ENCODE measurements at regions of chr1 and their contacts with region 1.

Region 1: GRCh38 chr1:172429331-172430127 is 9.0 kb downstream of the C1orf105 start:
- DNase-seq: peak; percentile 50
- H3K4me3 Mint-ChIP-seq: no peak overlapping the region
- H3K27ac Mint-ChIP-seq: no peak overlapping the region
- H3K4me1 Mint-ChIP-seq: peaks cover 33% of the 10 kb centered on the region
- H3K27me3 Mint-ChIP-seq: no peaks in the 10 kb centered on the region

Region 2: DNA sequence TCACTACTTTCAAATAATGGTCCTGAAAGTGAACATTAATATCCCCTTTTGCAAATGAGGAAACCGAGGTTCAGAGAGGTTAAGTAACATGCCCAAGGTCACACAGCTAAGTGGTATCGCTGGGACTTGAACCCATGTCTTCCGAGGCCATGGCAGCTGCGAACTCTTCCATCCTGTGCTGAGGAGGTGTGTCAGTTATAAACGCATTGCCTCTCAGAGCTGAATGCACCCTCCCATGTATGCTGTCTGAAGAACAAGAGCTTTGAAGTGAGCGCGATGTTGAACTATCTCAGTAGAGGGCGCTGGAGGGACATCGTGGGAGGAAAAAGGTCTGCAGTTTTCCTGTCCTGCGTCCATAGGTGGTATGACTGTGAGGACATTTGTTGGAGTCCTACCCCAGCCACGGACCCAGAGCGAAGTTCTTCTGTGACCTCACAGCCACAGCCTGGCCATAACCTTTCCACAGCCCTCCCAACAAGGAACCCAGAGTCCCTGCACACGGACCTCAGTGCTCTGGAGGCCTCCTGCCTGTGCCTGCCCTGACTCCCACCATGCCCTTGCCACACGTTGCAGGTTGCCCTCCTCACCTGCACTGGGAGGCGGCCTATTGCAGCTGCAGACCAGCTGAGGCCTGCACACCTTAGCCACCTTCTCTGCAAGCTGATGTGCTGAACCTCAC is 784.6 kb before region 1 on chr1:
- CTCF ChIA-PET with region 1: no interaction called
- POLR2A ChIA-PET with region 1: no interaction called
- intact Hi-C with region 1: loop called (anchors 5 kb)
- DNase-seq: peak; percentile 82
- H3K4me3 Mint-ChIP-seq: no peak overlapping the region
- H3K27ac Mint-ChIP-seq: no peak overlapping the region
- H3K4me1 Mint-ChIP-seq: peaks cover 4% of the 10 kb centered on the region
- H3K27me3 Mint-ChIP-seq: no peaks in the 10 kb centered on the region

Region 3: DNA sequence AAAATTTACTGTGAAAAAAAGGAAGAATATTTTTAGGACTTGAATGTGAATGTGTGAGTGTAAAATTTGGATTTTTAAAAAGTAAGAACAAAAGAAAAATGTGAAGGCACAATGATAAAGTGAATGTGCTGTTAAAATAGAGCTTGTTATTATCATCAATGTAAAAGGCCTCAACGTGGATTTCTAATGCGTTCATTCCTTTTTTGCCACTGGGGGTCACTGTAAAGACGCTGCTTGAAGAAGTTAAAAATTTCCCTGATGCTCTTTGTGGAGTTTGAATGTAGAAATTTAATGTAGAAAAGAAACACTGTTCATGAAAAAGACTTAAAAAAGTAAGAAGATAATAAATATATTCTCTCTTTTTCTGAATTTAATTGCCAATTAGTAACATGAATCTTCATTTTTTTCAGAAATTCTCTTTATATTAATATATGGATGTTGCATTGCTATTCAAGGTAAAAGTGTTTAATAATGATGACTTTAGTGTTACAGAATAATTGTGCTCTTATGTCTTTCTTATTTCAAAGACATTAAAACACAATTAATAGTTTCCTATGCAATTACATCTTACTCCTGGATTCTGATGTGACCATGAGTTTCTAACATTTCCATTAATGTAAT is 426.7 kb before region 1 on chr1:
- CTCF ChIA-PET with region 1: interaction called, 40 read pairs
- POLR2A ChIA-PET with region 1: no interaction called
- intact Hi-C with region 1: loop called (anchors 1 kb)
- DNase-seq: peak; percentile 25
- H3K4me3 Mint-ChIP-seq: no peak overlapping the region
- H3K27ac Mint-ChIP-seq: no peak overlapping the region
- H3K4me1 Mint-ChIP-seq: no peaks in the 10 kb centered on the region
- H3K27me3 Mint-ChIP-seq: no peaks in the 10 kb centered on the region

Region 4: GRCh38 chr1:172443626-172444453 is 14.3 kb after region 1 on chr1 and contains the start of gene PIGC:
- CTCF ChIA-PET with region 1: interaction called, 18 read pairs
- POLR2A ChIA-PET with region 1: no interaction called
- intact Hi-C with region 1: loop called (anchors 1 kb)
- DNase-seq: peak; percentile 95
- H3K4me3 Mint-ChIP-seq: peak within 1 kb of the TSS; percentile 87
- H3K27ac Mint-ChIP-seq: peak within 1 kb of the TSS; percentile 83
- H3K4me1 Mint-ChIP-seq: peaks cover 38% of the 10 kb centered on the region
- H3K27me3 Mint-ChIP-seq: no peaks in the 10 kb centered on the region
- total RNA-seq, gene PIGC: 16.6 to 17.4 TPM

Measured in activated CD4-positive, alpha-beta memory T cell treated with anti-CD3 and anti-CD28 coated beads for 36 hours (primary cell).